CD14-positive monocyte (primary cell): ENCODE measurements at regions of chr4 and their contacts with region 1.

Region 1: DNA sequence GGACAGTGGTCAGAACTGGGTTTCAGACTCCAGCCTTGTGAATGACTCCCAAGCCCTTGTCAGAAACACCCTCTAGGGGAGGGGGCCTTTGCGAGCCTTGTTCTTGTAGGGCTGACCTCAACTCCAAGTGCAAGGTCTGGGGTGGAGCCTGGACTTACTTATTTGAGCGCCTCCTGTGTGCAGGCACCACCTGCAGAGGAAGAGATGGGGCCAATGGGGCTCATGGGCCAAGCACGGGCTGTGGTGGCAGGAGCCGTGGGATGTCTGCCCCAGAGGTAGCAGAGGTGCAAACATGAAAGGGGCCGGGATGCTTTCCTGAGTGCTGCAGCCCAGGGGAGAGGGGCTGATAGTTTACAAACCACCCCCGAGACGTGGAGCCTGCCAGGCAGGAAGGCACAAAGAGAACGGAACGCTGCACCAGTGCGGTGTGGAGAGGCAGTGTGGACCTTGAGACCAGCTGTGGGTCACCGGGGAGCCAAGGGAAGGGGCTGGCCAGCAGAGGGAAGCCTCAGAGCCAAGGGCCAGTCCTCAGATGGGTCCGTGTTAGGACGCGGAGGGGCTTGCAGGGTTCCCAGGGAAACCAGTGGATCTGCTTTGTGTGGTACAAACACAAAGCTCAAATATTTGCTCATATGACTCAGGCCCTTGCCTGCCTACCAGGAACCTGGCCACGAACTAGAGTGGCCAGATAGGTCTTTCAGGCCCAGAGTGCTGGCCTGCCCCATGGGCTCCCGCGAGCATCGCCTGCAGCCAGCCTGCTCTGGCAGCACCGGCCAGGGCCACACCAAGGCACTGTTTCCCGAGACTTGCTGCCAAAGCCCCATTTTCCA is 8.7 kb upstream of the TADA2B start:
- DNase-seq: no peak
- H3K4me3 ChIP-seq: no peak overlapping the region
- H3K4me3 Mint-ChIP-seq: no peak overlapping the region
- H3K27ac ChIP-seq: no peak overlapping the region
- H3K27ac Mint-ChIP-seq: peak overlapping the region in 2 of 7 donors; percentile 62 to 63
- H3K4me1 ChIP-seq: no peaks in the 10 kb centered on the region
- H3K4me1 Mint-ChIP-seq: peaks cover 3% of the 10 kb centered on the region
- H3K27me3 ChIP-seq: no peaks in the 10 kb centered on the region
- H3K27me3 Mint-ChIP-seq: peaks cover 0 to 2% (median 1%) of the 10 kb centered on the region in 3 donors
- CTCF ChIP-seq: no peak

Region 2: DNA sequence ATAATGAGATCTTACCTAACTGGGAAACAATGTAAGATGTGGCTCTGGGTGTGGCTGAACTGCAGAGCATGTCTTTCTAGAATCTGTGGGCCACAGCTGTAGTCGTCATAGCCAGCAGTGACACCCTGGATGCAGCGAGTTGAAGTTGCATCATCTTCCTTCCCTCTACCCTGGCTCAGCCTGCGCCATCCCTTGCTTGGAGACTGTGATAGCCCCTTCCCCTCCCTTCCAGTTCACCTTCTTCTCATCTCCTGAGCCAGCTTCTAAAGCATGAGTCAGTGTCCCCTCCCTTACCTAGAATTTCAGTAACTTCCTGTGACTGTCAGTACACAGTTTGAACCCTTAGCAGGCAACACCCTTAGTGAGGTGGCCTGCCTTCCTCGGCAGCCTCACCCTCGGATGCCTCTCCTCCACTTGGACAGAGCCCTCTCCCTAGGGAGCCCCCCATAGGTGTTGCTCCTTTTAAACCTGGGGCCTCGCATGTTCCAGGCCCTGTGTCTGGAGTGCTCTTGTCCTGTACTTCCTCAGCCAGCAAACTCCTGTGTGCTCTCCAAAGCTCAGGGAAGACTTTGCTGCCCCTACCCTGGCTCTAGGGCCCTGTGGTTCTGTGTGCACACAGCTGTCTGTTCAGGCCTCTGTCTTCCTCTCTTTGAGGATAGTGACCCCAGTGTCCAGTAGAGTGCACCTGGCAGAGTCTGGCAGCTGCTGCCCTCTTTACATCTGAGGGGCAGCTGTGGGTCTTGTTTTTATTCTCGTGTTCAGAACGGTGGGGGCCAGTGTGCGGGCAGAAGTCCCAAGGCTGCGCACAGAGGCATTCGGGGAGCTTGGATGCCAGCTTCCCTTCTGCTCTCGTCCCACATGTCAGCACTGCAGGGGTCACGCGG is 35.1 kb before region 1 on chr4:
- intact Hi-C with region 1: loop called in 1 of 2 experiments (anchors 5 kb)
- DNase-seq: peak; percentile 43 to 51 (median 48)
- H3K4me3 ChIP-seq: peak overlapping the region in 1 of 3 experiments; percentile 8
- H3K4me3 Mint-ChIP-seq: no peak overlapping the region
- H3K27ac ChIP-seq: peak overlapping the region; percentile 46 to 78
- H3K27ac Mint-ChIP-seq: peak overlapping the region; percentile 72 to 92 (median 87)
- H3K4me1 ChIP-seq: peaks cover 21% of the 10 kb centered on the region in 2 donors
- H3K4me1 Mint-ChIP-seq: peaks cover 22% of the 10 kb centered on the region
- H3K27me3 ChIP-seq: no peaks in the 10 kb centered on the region
- H3K27me3 Mint-ChIP-seq: no peaks in the 10 kb centered on the region
- CTCF ChIP-seq: no peak